Calu3 (cell line): ENCODE measurements at regions of chr20 and their contacts with region 1.

Region 1: GRCh38 chr20:57383447-57384347 is 7.5 kb upstream of the RBM38 start:
- DNase-seq: no peak
- H3K4me3 Mint-ChIP-seq: no peak overlapping the region
- H3K27ac Mint-ChIP-seq: no peak overlapping the region
- H3K4me1 Mint-ChIP-seq: no peaks in the 10 kb centered on the region
- H3K27me3 Mint-ChIP-seq: no peaks in the 10 kb centered on the region
- CTCF ChIP-seq: no peak

Region 2: DNA sequence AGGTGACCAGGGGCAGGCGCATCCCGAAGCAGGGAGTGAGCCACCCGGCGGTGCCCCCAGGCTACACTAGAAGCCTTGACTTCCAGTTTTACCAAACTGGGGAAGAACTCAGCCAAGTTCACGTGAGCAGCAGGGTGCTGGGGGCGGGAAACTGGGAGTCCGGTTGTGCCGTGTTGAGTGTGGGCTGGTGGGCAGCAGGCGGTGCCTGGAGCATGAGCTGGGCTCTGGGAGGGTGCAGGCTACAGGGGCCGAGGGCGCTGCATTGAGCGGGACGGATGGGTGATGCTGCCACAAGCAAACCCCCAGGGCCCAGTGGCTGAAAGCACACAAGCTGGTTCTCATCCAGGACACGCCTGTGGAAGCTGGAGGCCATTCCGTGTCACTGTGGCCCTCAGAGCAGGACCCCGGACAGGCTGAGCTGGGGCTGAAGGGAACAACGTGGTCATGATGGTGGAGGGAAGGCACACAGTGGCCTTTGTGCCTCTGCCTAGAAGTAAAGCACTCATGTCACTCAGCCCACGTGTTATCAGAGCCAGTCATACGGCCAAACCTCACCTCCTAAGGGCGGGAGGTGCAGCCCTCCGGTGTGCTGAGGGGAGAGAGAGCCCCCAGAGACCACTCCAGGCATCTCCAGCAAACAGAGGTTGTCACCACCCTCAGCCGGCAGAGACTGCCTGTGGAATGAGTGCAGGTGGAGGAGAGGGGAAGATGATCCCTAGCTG is 37.0 kb after region 1 on chr20:
- CTCF ChIA-PET with region 1: no interaction called
- intact Hi-C with region 1: loop called (anchors 2 kb)
- DNase-seq: peak; percentile 56
- H3K4me3 Mint-ChIP-seq: no peak overlapping the region
- H3K27ac Mint-ChIP-seq: no peak overlapping the region
- H3K4me1 Mint-ChIP-seq: peaks cover 30% of the 10 kb centered on the region
- H3K27me3 Mint-ChIP-seq: peaks cover 91% of the 10 kb centered on the region
- CTCF ChIP-seq: no peak

Region 3: GRCh38 chr20:58127701-58128111 is 744.0 kb after region 1 on chr20:
- CTCF ChIA-PET with region 1: no interaction called
- intact Hi-C with region 1: no loop called
- DNase-seq: peak; percentile 95
- H3K4me3 Mint-ChIP-seq: peak overlapping the region; percentile 2
- H3K27ac Mint-ChIP-seq: peak overlapping the region; percentile 84
- H3K4me1 Mint-ChIP-seq: peaks cover 55% of the 10 kb centered on the region
- H3K27me3 Mint-ChIP-seq: no peaks in the 10 kb centered on the region
- CTCF ChIP-seq: no peak